Activated CD8-positive, alpha-beta T cell treated with anti-CD3 and anti-CD28 coated beads for 36 hours (primary cell): ENCODE measurements at regions of chr11 and their contacts with region 1.

Region 1: GRCh38 chr11:2305140-2305840 is 3.5 kb downstream of the TSPAN32 start:
- DNase-seq: peak; percentile 94
- ATAC-seq: peak; percentile 43
- H3K4me3 Mint-ChIP-seq: peak overlapping the region; percentile 53
- H3K27ac Mint-ChIP-seq: peak overlapping the region; percentile 91
- H3K4me1 Mint-ChIP-seq: peaks cover 65% of the 10 kb centered on the region
- H3K27me3 Mint-ChIP-seq: no peaks in the 10 kb centered on the region
- CTCF ChIP-seq: peak; percentile 80

Region 2: DNA sequence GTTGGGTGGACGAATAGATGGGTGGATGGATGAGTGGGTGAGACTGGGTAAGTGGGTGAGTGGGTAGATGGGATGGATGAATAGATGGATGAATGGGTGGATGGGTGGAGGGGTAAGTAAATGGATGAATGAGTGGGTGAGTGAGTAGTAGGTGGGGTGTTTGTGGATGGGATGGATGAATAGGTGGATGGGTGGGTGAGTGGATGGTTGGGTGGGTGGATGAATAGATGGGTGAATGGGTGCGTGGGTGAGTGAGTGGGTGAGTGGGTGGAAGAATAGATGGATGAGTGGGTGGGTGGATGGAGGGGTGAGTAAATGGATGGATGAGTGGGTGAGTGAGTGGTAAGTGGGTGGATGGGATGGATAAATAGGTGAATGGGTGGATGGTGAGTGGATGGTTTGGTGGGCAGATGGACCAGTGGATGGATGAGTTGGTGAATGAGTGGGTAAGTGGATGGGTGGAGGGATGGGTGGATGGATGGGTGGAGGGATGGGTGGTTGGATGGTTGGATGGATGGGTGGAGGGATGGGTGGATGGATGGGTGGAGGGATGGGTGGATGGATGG is 178.7 kb before region 1 on chr11:
- CTCF ChIA-PET with region 1: no interaction called
- POLR2A ChIA-PET with region 1: no interaction called
- intact Hi-C with region 1: no loop called
- DNase-seq: no peak
- ATAC-seq: no peak
- H3K4me3 Mint-ChIP-seq: no peak overlapping the region
- H3K27ac Mint-ChIP-seq: no peak overlapping the region
- H3K4me1 Mint-ChIP-seq: no peaks in the 10 kb centered on the region
- H3K27me3 Mint-ChIP-seq: peaks cover 12% of the 10 kb centered on the region
- CTCF ChIP-seq: no peak

Region 3: DNA sequence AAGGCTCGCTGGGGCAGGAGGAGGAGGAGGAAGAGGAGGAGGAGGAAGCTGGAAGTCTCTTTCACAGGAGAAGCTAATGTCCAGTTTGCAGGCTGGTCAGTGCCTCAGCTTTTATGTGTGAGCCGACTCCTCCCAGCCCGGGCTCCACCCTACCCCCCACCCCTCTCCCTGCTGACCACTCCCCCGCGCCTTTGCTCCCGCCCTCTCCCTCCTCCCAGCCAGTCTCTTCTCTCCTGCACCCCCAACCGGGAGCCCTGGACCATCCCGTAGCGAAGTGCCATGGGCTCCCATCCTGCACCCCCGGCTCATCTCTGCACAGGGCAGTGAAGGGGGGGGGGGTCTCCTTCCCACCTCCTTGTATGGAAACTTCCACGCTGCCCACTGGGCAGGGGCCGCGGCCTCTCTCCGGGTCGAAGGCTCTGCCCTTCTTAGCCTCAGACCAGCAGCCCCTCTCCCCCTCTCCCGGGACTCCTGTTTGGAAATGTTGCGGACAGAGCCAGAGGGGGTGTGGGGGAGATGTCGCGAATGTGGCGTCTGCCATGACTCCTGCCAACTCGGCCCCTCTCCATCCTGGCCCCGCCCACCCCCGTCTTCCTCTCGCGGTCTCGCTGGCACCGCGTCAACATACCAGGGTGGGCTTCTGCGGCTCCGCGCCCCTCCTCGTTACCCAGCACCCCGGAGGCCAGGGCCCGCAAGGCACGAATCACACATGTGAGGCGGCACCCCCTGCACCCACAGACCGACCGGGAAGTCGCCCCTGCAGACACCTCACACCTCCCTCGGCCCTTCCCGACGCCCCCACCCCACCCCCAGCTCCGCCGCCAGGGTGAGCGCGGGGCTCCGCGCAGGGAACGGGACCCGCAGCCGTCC is 167.9 kb before region 1 on chr11:
- CTCF ChIA-PET with region 1: no interaction called
- POLR2A ChIA-PET with region 1: no interaction called
- intact Hi-C with region 1: no loop called
- DNase-seq: no peak
- ATAC-seq: no peak
- H3K4me3 Mint-ChIP-seq: peak overlapping the region; percentile 26
- H3K27ac Mint-ChIP-seq: no peak overlapping the region
- H3K4me1 Mint-ChIP-seq: peaks cover 20% of the 10 kb centered on the region
- H3K27me3 Mint-ChIP-seq: peaks cover 60% of the 10 kb centered on the region
- CTCF ChIP-seq: no peak

Region 4: GRCh38 chr11:2186669-2187279 is 118.5 kb before region 1 on chr11:
- CTCF ChIA-PET with region 1: interaction called, 26 read pairs
- POLR2A ChIA-PET with region 1: no interaction called
- intact Hi-C with region 1: no loop called
- DNase-seq: peak; percentile 76
- ATAC-seq: peak; percentile 94
- H3K4me3 Mint-ChIP-seq: no peak overlapping the region
- H3K27ac Mint-ChIP-seq: no peak overlapping the region
- H3K4me1 Mint-ChIP-seq: no peaks in the 10 kb centered on the region
- H3K27me3 Mint-ChIP-seq: peaks cover 18% of the 10 kb centered on the region
- CTCF ChIP-seq: peak; percentile 75

Region 5: DNA sequence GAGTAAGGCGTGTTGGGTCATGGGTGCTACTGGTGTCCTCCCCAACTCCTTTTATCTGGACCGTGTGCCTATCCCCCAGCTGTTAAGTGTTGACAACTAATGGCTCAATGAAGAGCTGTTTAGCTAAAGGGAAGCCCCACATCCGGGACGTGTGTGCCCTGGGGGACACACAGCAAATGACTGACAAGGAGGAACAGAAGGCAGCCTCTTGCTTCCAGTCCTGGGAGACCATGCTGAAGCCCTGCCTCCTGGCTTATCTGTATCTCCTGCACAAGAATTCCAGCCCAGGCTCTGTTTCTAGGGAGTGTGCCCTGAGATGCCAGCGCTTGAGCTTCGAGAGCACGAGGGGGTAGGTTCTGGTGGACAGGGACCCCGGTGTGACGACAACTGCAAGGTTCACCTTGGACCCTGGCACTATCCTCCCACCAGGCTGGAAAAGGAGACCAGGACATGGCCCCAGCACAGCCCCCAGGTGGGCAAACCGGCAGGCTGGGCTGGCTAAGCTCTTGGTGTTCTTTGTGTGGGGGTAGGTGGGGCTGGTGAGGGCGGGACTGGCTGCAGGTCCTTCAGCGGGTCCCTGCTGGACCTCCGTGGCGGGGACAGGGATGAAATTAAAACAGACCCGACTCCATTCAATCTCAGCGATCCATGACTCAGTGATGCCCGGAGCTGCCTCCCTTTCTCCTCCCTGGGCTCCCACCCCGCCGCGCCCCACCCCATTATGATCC is 55.9 kb before region 1 on chr11:
- CTCF ChIA-PET with region 1: interaction called, 10 read pairs
- POLR2A ChIA-PET with region 1: no interaction called
- intact Hi-C with region 1: no loop called
- DNase-seq: no peak
- ATAC-seq: no peak
- H3K4me3 Mint-ChIP-seq: no peak overlapping the region
- H3K27ac Mint-ChIP-seq: no peak overlapping the region
- H3K4me1 Mint-ChIP-seq: no peaks in the 10 kb centered on the region
- H3K27me3 Mint-ChIP-seq: no peaks in the 10 kb centered on the region
- CTCF ChIP-seq: no peak

Region 6: GRCh38 chr11:2342981-2343380 is 37.7 kb after region 1 on chr11:
- CTCF ChIA-PET with region 1: interaction called, 10 read pairs
- POLR2A ChIA-PET with region 1: no interaction called
- intact Hi-C with region 1: no loop called
- DNase-seq: no peak
- ATAC-seq: no peak
- H3K4me3 Mint-ChIP-seq: no peak overlapping the region
- H3K27ac Mint-ChIP-seq: no peak overlapping the region
- H3K4me1 Mint-ChIP-seq: no peaks in the 10 kb centered on the region
- H3K27me3 Mint-ChIP-seq: no peaks in the 10 kb centered on the region
- CTCF ChIP-seq: no peak

Region 7: GRCh38 chr11:2383852-2384804 is 78.8 kb after region 1 on chr11:
- CTCF ChIA-PET with region 1: interaction called, 17 read pairs
- POLR2A ChIA-PET with region 1: interaction called, 9 read pairs
- intact Hi-C with region 1: no loop called
- DNase-seq: no peak
- ATAC-seq: peak; percentile 25
- H3K4me3 Mint-ChIP-seq: no peak overlapping the region
- H3K27ac Mint-ChIP-seq: no peak overlapping the region
- H3K4me1 Mint-ChIP-seq: peaks cover 59% of the 10 kb centered on the region
- H3K27me3 Mint-ChIP-seq: no peaks in the 10 kb centered on the region
- CTCF ChIP-seq: no peak

Region 8: GRCh38 chr11:2409611-2410468 is 104.5 kb after region 1 on chr11:
- CTCF ChIA-PET with region 1: interaction called, 62 read pairs
- POLR2A ChIA-PET with region 1: no interaction called
- intact Hi-C with region 1: no loop called
- DNase-seq: no peak
- ATAC-seq: no peak
- H3K4me3 Mint-ChIP-seq: no peak overlapping the region
- H3K27ac Mint-ChIP-seq: no peak overlapping the region
- H3K4me1 Mint-ChIP-seq: no peaks in the 10 kb centered on the region
- H3K27me3 Mint-ChIP-seq: no peaks in the 10 kb centered on the region
- CTCF ChIP-seq: no peak

Region 9: GRCh38 chr11:2892215-2893020 is 587.1 kb after region 1 on chr11:
- CTCF ChIA-PET with region 1: interaction called, 4 read pairs
- POLR2A ChIA-PET with region 1: interaction called, 3 read pairs
- intact Hi-C with region 1: loop called (anchors 10 kb)
- DNase-seq: peak; percentile 84
- ATAC-seq: peak; percentile 66
- H3K4me3 Mint-ChIP-seq: peak overlapping the region; percentile 83
- H3K27ac Mint-ChIP-seq: peak overlapping the region; percentile 91
- H3K4me1 Mint-ChIP-seq: peaks cover 17% of the 10 kb centered on the region
- H3K27me3 Mint-ChIP-seq: no peaks in the 10 kb centered on the region
- CTCF ChIP-seq: peak; percentile 96